CD8-positive, alpha-beta T cell (primary cell): ENCODE measurements at regions of chr3 and their contacts with region 1.

Region 1: GRCh38 chr3:136752422-136753325 is 496 bp upstream of the STAG1 start:
- DNase-seq: peak; percentile 98 to 99 (median 99)
- ATAC-seq: peak; percentile 81
- H3K4me3 ChIP-seq: peak overlapping the region; percentile 71 to 73
- H3K4me3 Mint-ChIP-seq: peak overlapping the region; percentile 95
- H3K27ac ChIP-seq: peak overlapping the region; percentile 90 to 96
- H3K27ac Mint-ChIP-seq: peak overlapping the region; percentile 91
- H3K4me1 ChIP-seq: peaks cover 37% of the 10 kb centered on the region
- H3K4me1 Mint-ChIP-seq: peaks cover 40% of the 10 kb centered on the region
- H3K27me3 ChIP-seq: no peaks in the 10 kb centered on the region
- H3K27me3 Mint-ChIP-seq: no peaks in the 10 kb centered on the region
- CTCF ChIP-seq: no peak

Region 2: DNA sequence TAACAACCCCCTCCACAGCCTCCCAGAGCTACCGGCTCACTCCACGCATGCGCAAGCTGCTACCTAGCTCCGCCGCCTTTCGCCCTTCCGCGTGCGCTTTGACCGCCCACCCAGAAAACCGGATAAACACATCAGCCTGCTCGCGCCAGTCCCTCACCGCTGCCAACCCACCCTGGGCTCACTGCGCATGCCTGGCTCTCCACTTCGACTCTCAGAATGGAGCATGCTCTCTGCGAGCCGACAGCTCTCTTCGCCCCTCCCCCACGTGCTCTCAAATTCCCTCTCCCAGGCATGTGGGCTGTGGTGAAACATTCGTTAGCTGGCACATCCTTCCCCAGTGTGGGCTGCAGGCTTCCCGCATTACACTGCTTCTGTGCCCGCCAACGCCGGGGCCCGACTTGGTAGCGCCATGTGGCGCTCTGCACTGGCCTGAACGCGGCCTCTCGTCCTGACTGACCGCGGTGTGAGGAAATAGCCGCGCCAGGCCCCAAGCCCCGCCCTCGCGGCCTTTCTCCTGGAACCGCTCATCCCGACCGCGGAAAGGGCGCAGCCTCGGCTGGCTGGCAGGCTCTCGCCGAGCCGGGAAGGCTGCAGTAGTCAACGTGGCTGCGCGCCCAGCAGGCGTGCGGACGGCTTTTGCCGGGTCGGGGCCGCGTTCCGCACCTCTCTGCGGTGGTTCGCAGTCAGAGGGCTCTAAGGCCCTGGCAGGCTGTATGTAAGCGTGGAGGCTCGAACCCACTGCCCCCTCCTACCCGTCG is 556.1 kb before region 1 on chr3:
- CTCF ChIA-PET with region 1: interaction called, 15 read pairs
- POLR2A ChIA-PET with region 1: interaction called, 60 read pairs
- intact Hi-C with region 1: loop called (anchors 1 to 2 kb)
- DNase-seq: peak; percentile 95 to 99 (median 99)
- ATAC-seq: peak; percentile 60
- H3K4me3 ChIP-seq: peak overlapping the region; percentile 84 to 91
- H3K4me3 Mint-ChIP-seq: peak overlapping the region; percentile 99
- H3K27ac ChIP-seq: peak overlapping the region; percentile 71 to 96
- H3K27ac Mint-ChIP-seq: peak overlapping the region; percentile 100
- H3K4me1 ChIP-seq: peaks cover 16% of the 10 kb centered on the region
- H3K4me1 Mint-ChIP-seq: peaks cover 37% of the 10 kb centered on the region
- H3K27me3 ChIP-seq: no peaks in the 10 kb centered on the region
- H3K27me3 Mint-ChIP-seq: no peaks in the 10 kb centered on the region
- CTCF ChIP-seq: no peak

Region 3: GRCh38 chr3:136390574-136390973 is 362.1 kb before region 1 on chr3:
- CTCF ChIA-PET with region 1: interaction called, 37 read pairs
- POLR2A ChIA-PET with region 1: interaction called, 12 read pairs
- intact Hi-C with region 1: loop called (anchors 1 to 5 kb)
- DNase-seq: no peak
- ATAC-seq: no peak
- H3K4me3 ChIP-seq: no peak overlapping the region
- H3K4me3 Mint-ChIP-seq: no peak overlapping the region
- H3K27ac ChIP-seq: no peak overlapping the region
- H3K27ac Mint-ChIP-seq: no peak overlapping the region
- H3K4me1 ChIP-seq: no peaks in the 10 kb centered on the region
- H3K4me1 Mint-ChIP-seq: peaks cover 2% of the 10 kb centered on the region
- H3K27me3 ChIP-seq: no peaks in the 10 kb centered on the region
- H3K27me3 Mint-ChIP-seq: no peaks in the 10 kb centered on the region
- CTCF ChIP-seq: no peak

Region 4: DNA sequence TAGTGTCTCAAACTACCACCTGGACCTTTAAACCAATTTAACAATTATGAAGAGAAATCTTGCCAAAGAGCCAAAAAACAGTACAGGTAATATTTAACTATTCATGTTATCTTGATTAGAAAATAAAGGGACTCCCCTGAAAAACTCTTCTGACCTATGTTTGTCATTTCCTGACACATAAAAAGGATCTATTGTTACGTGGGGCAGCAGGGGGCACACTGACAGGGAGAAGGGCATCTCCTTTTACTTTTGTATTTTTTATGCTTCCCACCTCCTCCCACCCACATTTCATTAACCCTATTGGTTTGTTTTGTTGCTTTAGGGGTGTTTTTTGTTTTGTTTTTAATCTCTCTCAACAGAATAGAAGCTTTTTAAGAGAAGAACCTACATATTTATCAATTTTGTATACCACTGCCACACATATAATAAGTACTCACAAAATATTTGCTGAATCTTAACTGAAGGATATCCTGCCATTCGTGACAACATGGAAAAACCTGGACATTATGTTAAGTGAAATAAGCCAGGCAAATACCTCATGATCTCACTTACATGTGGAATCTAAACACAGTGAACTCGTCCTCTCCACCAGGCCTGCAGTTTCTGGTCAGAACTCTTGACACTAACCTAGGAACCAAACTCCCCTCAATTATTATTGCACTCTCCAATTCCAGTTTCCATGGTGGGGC is 18.1 kb before region 1 on chr3:
- CTCF ChIA-PET with region 1: interaction called, 8 read pairs
- POLR2A ChIA-PET with region 1: interaction called, 9 read pairs
- intact Hi-C with region 1: loop called in 1 of 2 experiments (anchors 1 kb)
- DNase-seq: peak in 3 of 9 experiments; percentile 15 to 64 (median 51)
- ATAC-seq: peak; percentile 49
- H3K4me3 ChIP-seq: no peak overlapping the region
- H3K4me3 Mint-ChIP-seq: no peak overlapping the region
- H3K27ac ChIP-seq: peak overlapping the region in 1 of 2 experiments; percentile 20
- H3K27ac Mint-ChIP-seq: no peak overlapping the region
- H3K4me1 ChIP-seq: peaks cover 30% of the 10 kb centered on the region
- H3K4me1 Mint-ChIP-seq: peaks cover 59% of the 10 kb centered on the region
- H3K27me3 ChIP-seq: no peaks in the 10 kb centered on the region
- H3K27me3 Mint-ChIP-seq: no peaks in the 10 kb centered on the region
- CTCF ChIP-seq: peak; percentile 34

Region 5: GRCh38 chr3:136861890-136862616 is 109.4 kb after region 1 on chr3 and contains the start of gene NCK1:
- CTCF ChIA-PET with region 1: interaction called, 46 read pairs
- POLR2A ChIA-PET with region 1: interaction called, 83 read pairs
- intact Hi-C with region 1: loop called (anchors 1 kb)
- DNase-seq: peak; percentile 97 to 100 (median 99)
- ATAC-seq: peak; percentile 93
- H3K4me3 ChIP-seq: peak within 1 kb of the TSS; percentile 76 to 92
- H3K4me3 Mint-ChIP-seq: peak within 1 kb of the TSS; percentile 90
- H3K27ac ChIP-seq: peak within 1 kb of the TSS; percentile 86 to 96
- H3K27ac Mint-ChIP-seq: peak within 1 kb of the TSS; percentile 98
- H3K4me1 ChIP-seq: peaks cover 23% of the 10 kb centered on the region
- H3K4me1 Mint-ChIP-seq: peaks cover 63% of the 10 kb centered on the region
- H3K27me3 ChIP-seq: no peaks in the 10 kb centered on the region
- H3K27me3 Mint-ChIP-seq: no peaks in the 10 kb centered on the region
- CTCF ChIP-seq: no peak
- total RNA-seq, gene NCK1: 54.8 to 68.7 TPM

Region 6: DNA sequence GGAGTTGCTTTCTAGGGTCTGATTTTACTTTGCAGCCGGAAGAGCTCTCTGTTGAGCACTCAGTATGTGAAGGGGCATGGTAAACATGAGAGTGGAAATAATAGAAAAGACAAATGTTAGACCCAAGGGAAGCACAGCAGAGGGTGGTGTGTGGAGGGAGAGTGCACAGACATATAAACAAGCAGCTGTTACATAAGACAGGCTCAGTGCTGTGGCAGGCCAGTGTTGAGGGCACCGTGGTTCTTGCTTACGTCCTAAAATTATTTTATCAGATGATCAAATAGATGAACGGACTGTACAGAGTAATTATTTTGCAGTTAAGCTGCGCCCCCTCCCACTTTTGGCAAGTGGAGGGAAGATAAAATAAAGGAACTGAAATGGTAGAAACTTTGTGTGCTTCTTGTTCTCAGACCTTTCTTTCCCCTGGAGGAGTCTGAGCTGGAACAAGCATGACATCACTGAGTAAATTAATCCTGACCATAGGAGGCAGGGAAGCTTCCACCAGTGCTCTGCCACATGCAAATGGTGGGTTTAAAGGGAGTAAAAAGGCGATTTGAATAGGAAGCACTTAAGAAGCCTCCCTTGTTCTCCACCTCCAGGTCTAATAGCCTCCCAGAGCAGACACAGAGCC is 410.7 kb after region 1 on chr3:
- CTCF ChIA-PET with region 1: no interaction called
- POLR2A ChIA-PET with region 1: no interaction called
- intact Hi-C with region 1: no loop called
- DNase-seq: no peak
- ATAC-seq: no peak
- H3K4me3 ChIP-seq: no peak overlapping the region
- H3K4me3 Mint-ChIP-seq: no peak overlapping the region
- H3K27ac ChIP-seq: no peak overlapping the region
- H3K27ac Mint-ChIP-seq: no peak overlapping the region
- H3K4me1 ChIP-seq: no peaks in the 10 kb centered on the region
- H3K4me1 Mint-ChIP-seq: no peaks in the 10 kb centered on the region
- H3K27me3 ChIP-seq: no peaks in the 10 kb centered on the region
- H3K27me3 Mint-ChIP-seq: peaks cover 10% of the 10 kb centered on the region
- CTCF ChIP-seq: no peak

Region 7: GRCh38 chr3:138594150-138594934 is 1841.7 kb after region 1 on chr3 and contains the start of gene CEP70:
- CTCF ChIA-PET with region 1: no interaction called
- POLR2A ChIA-PET with region 1: no interaction called
- intact Hi-C with region 1: loop called in 1 of 2 experiments (anchors 10 kb)
- DNase-seq: peak; percentile 83 to 96 (median 91)
- ATAC-seq: peak; percentile 93
- H3K4me3 ChIP-seq: peak within 1 kb of the TSS; percentile 83 to 93
- H3K4me3 Mint-ChIP-seq: peak within 1 kb of the TSS; percentile 94
- H3K27ac ChIP-seq: peak within 1 kb of the TSS; percentile 90 to 95
- H3K27ac Mint-ChIP-seq: peak within 1 kb of the TSS; percentile 99
- H3K4me1 ChIP-seq: no peaks in the 10 kb centered on the region
- H3K4me1 Mint-ChIP-seq: peaks cover 14% of the 10 kb centered on the region
- H3K27me3 ChIP-seq: no peaks in the 10 kb centered on the region
- H3K27me3 Mint-ChIP-seq: no peaks in the 10 kb centered on the region
- CTCF ChIP-seq: peak; percentile 86
- total RNA-seq, gene CEP70: 29.5 to 31.0 TPM